Tibial artery (tissue), 4 donors: ENCODE measurements at regions of chr9 and their contacts with region 1.

Region 1: GRCh38 chr9:97501177-97501971 is at the start of gene TMOD1:
- DNase-seq: peak; percentile 62 to 90
- H3K4me3 ChIP-seq: peak within 1 kb of the TSS; percentile 67 to 99
- H3K27ac ChIP-seq: peak within 1 kb of the TSS; percentile 94 to 99
- H3K4me1 ChIP-seq: peaks cover 0 to 40% (median 24%) of the 10 kb centered on the region in 4 donors
- H3K27me3 ChIP-seq: no peaks in the 10 kb centered on the region
- CTCF ChIP-seq: no peak

Region 2: GRCh38 chr9:97557606-97558095 is 56.3 kb after region 1 on chr9:
- intact Hi-C with region 1: loop called (anchors 2 kb)
- DNase-seq: peak; percentile 95 to 97
- H3K4me3 ChIP-seq: no peak overlapping the region
- H3K27ac ChIP-seq: peak overlapping the region; percentile 91 to 92
- H3K4me1 ChIP-seq: peaks cover 6 to 86% (median 46%) of the 10 kb centered on the region in 4 donors
- H3K27me3 ChIP-seq: no peaks in the 10 kb centered on the region
- CTCF ChIP-seq: peak in 1 of 2 experiments; percentile 20